GM10248 (cell line): ENCODE measurements at regions of chr7 and their contacts with region 1.

Region 1: DNA sequence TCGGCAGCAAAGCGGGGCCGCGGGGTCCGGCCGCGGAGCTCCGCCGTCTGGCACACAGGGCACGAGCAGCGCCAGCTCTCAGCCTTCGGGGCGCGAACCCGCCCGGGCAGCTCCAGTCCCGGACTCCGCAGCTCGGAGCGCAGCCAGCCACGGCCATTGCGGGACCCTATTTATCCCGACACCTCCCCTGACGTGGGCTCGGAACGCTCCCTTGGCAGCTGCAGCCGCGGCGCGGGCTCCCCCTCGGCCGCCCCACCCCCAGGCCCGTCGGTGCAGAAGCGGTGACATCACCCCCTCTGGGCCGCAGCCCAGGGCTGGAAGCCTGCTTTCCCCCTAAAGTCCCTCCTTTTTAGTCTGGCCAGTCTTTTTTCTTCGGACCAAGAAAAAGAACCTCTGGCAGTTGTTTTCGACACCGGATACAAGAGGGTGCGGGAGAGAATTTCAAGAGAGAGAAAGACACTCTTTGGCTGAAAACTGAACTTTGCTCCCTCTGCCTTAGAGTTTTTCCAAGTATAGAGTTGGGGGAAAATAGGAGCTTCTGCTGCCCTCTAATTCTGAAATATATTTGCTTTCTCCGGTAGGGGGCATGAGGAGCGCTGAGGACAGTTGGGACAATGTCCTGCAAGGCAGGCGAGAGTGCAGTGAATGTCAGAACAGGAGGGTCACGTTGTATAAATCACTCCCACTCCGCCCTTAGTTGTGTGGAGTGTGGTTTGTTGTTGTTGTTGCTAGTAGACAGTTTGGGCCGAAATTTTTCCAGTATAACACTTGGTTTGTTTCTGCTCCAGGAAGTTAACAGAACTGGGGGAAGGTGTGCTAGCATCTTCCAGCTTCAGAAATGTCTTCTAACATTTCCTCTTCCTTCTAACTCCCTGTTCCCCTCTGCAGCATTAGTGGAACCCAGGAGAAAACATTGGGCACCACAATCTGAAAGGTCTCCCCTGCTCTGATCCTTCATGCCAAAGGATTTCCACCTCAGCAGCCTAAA is at the start of gene SFRP4:
- DNase-seq: peak; percentile 51
- CTCF ChIP-seq: peak; percentile 66

Region 2: GRCh38 chr7:37901236-37901827 is 15.6 kb before region 1 on chr7:
- CTCF ChIA-PET with region 1: interaction called, 19 read pairs
- POLR2A ChIA-PET with region 1: no interaction called
- DNase-seq: peak; percentile 30
- CTCF ChIP-seq: peak; percentile 32

Region 3: DNA sequence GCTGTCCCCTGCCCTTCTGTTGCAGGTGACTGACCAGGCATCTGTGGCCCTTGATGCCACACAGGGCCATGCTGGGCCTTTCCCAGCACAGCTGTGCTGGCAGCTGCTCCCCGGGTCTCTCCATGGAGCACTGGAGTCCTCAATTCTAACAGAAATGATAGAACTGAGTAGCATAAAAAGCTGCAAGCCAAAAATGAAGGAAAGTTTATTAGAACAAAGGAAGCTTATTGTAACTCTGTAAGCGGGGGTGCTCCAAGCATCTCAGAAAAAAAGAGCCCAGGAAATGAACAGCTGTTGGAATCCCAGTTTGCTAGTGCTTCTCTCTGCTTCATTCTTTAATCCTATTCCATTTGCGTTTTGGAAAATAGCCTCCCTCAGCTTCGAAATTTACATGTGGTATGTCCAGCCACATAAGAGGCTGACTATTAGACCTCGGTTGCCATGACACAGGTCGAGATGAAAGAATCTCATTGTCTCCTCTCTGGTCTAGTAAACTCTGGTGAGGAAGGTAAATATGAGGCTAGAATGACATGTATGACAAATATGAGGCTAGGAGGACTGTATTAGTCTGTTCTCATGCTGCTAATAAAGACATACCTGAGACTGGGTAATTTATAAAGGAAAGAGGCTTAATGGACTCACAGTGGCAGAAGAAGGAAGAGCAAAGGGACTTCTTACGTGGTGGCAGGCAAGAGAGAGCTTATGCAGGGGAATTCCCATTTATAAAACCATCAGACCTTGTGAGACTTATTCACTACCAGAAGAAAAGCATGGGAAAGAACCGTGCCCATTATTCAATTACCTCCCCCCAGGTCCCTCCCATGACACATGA is 27.2 kb after region 1 on chr7:
- CTCF ChIA-PET with region 1: interaction called, 11 read pairs
- POLR2A ChIA-PET with region 1: no interaction called
- DNase-seq: peak; percentile 28
- CTCF ChIP-seq: no peak